GM12878 (cell line): ENCODE measurements at regions of chr20 and their contacts with region 1.

Region 1: GRCh38 chr20:53738039-53738944 is 144.7 kb upstream of the ZNF217 start:
- DNase-seq: no peak
- ATAC-seq: no peak
- H3K4me3 ChIP-seq: 0 out of 2 replicates have a peak overlapping the region, but pooled peaks have one; percentile 69
- H3K27ac ChIP-seq: peak overlapping the region; percentile 86
- H3K4me1 ChIP-seq: peaks cover 56% of the 10 kb centered on the region
- H3K27me3 ChIP-seq: no peaks in the 10 kb centered on the region
- CTCF ChIP-seq: no peak
- EP300 ChIP-seq: no peak
- POLR2A ChIP-seq: no peak
- RAD21 ChIP-seq: no peak

Region 2: GRCh38 chr20:53594068-53595017 is 143.9 kb before region 1 on chr20:
- CTCF ChIA-PET with region 1: interaction called, 4 read pairs
- POLR2A ChIA-PET with region 1: interaction called, 4 read pairs
- RAD21 ChIA-PET with region 1: interaction called, 12 read pairs
- SMC1A ChIA-PET with region 1: interaction called, 4 read pairs
- in situ Hi-C with region 1: no loop called
- intact Hi-C with region 1: no loop called
- DNase-seq: no peak
- ATAC-seq: peak; percentile 77
- H3K4me3 ChIP-seq: peak overlapping the region; percentile 81
- H3K27ac ChIP-seq: peak overlapping the region; percentile 84
- H3K4me1 ChIP-seq: peaks cover 8% of the 10 kb centered on the region; the same call in 1 of the 2 replicates
- H3K27me3 ChIP-seq: no peaks in the 10 kb centered on the region
- CTCF ChIP-seq: peak; percentile 7 to 53 (median 40); a peak in 3 of 6 replicates
- EP300 ChIP-seq: no peak
- POLR2A ChIP-seq: peak; percentile 36; the same call in 1 of the 2 replicates
- RAD21 ChIP-seq: peak; percentile 40

Region 3: GRCh38 chr20:53652090-53652858 is 86.0 kb before region 1 on chr20:
- CTCF ChIA-PET with region 1: interaction called, 7 read pairs
- POLR2A ChIA-PET with region 1: interaction called, 10 read pairs
- RAD21 ChIA-PET with region 1: interaction called, 26 read pairs
- SMC1A ChIA-PET with region 1: interaction called, 149 read pairs
- in situ Hi-C with region 1: no loop called
- intact Hi-C with region 1: loop called (anchors 5 kb)
- DNase-seq: peak; percentile 93
- ATAC-seq: peak; percentile 76
- H3K4me3 ChIP-seq: peak overlapping the region; percentile 30; the same call in 1 of the 2 replicates
- H3K27ac ChIP-seq: peak overlapping the region; percentile 99
- H3K4me1 ChIP-seq: peaks cover 39% of the 10 kb centered on the region
- H3K27me3 ChIP-seq: no peaks in the 10 kb centered on the region
- CTCF ChIP-seq: no peak
- EP300 ChIP-seq: peak; percentile 68 to 72; a peak in 2 of 4 replicates
- POLR2A ChIP-seq: no peak
- RAD21 ChIP-seq: peak; percentile 17; the same call in 1 of the 2 replicates

Region 4: DNA sequence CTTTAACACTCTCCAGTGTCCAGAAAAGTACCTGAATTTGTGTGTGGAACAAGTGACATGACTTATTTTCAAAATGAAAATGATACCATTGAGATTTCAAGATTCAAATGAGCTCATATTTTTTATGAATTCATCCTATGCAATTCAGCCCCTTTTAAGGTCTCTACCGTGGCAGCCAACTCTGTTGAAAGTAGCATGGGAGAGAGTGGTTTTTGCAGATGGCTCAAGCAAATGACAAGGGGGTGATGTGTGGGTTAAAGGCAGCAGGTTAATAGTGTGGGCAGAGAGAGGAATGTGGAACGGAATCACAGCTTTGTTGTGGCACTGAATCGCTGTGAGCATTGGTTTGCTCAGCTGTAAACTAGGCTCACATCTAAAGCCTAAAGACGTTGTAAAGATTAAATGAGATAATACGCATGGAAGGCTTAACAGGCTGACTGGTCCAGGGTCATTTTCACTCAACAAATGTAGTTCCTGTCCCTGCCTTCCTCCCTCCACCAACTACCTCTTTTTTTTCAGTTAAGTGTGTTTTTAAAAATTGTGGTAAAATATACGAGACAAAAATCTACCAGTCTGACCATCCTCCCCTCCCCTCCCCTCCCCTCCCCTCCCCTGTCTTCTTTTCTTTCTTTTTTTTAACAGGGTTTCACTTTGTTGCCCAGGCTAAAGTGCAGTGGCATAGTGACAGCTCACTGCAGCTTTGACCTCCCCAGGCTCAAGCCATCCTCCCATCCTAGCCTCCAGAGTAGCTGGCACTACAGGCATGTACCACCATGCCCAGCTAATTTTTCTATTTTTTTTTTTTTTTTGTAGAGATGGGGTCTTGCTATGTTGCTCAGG is 29.9 kb before region 1 on chr20:
- CTCF ChIA-PET with region 1: interaction called, 9 read pairs
- POLR2A ChIA-PET with region 1: interaction called, 21 read pairs
- RAD21 ChIA-PET with region 1: interaction called, 33 read pairs
- SMC1A ChIA-PET with region 1: interaction called, 64 read pairs
- in situ Hi-C with region 1: no loop called
- intact Hi-C with region 1: loop called (anchors 2 kb)
- DNase-seq: peak; percentile 94
- ATAC-seq: peak; percentile 83
- H3K4me3 ChIP-seq: peak overlapping the region; percentile 43; the same call in 1 of the 2 replicates
- H3K27ac ChIP-seq: peak overlapping the region; percentile 97
- H3K4me1 ChIP-seq: peaks cover 45% of the 10 kb centered on the region
- H3K27me3 ChIP-seq: no peaks in the 10 kb centered on the region
- CTCF ChIP-seq: no peak
- EP300 ChIP-seq: peak in 1 of 2 experiments; percentile 35; a peak in 3 of 4 replicates
- POLR2A ChIP-seq: peak; percentile 36
- RAD21 ChIP-seq: 0 out of 2 replicates have a peak, but pooled peaks have one; percentile 6

Region 5: GRCh38 chr20:53828682-53829254 is 90.5 kb after region 1 on chr20:
- CTCF ChIA-PET with region 1: interaction called, 5 read pairs
- POLR2A ChIA-PET with region 1: interaction called, 9 read pairs
- RAD21 ChIA-PET with region 1: interaction called, 13 read pairs
- SMC1A ChIA-PET with region 1: interaction called, 16 read pairs
- in situ Hi-C with region 1: no loop called
- intact Hi-C with region 1: no loop called
- DNase-seq: no peak
- ATAC-seq: peak; percentile 2; the same call in 2 of the 3 replicates
- H3K4me3 ChIP-seq: peak overlapping the region; percentile 56
- H3K27ac ChIP-seq: peak overlapping the region; percentile 91
- H3K4me1 ChIP-seq: peaks cover 37% of the 10 kb centered on the region
- H3K27me3 ChIP-seq: no peaks in the 10 kb centered on the region
- CTCF ChIP-seq: 0 out of 6 replicates have a peak, but pooled peaks of 1 of the 3 experiments have one; percentile 4
- EP300 ChIP-seq: no peak
- POLR2A ChIP-seq: no peak
- RAD21 ChIP-seq: 0 out of 2 replicates have a peak, but pooled peaks have one; percentile 1

Region 6: DNA sequence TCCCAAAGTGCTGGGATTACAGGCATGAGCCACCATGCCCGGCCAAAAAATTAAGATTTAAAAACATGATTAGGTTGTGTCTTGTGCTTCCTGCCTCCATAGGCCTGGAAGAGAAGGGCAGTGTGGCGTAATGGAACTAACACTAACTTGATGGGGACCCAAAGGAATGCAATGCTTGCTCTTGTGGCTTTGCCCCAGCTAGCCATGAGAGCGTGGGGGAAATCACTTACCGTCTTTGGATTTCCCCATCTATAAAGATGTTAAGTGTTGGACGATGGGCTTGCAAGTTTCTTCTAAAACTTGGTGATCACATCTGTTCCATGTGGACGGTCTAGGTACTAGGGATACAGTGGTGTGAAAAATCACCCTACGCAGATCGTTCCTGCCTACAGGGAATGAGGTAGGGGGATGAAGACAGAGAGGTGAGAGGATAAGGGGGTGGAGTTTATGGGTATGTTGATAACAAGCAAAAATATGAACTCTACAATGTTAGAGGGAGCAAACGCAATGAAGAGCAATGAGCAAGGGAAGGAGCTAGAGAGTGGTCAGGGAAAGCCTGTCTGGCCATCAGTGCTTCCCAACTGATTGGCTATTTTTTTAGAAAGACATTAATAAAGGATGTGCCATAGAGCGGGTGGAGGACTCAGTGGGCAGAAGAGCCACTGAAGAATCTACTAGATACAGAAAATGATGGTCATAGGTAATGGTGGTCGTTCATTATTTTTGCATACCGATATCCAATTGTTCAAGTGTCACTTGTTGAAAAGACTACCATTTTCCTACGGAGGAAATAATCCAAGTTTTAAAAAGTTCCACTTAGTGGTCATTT is 166.9 kb after region 1 on chr20:
- CTCF ChIA-PET with region 1: interaction called, 3 read pairs
- POLR2A ChIA-PET with region 1: interaction called, 5 read pairs
- RAD21 ChIA-PET with region 1: interaction called, 13 read pairs
- SMC1A ChIA-PET with region 1: interaction called, 11 read pairs
- in situ Hi-C with region 1: no loop called
- intact Hi-C with region 1: no loop called
- DNase-seq: no peak
- ATAC-seq: peak; percentile 51
- H3K4me3 ChIP-seq: 0 out of 2 replicates have a peak overlapping the region, but pooled peaks have one; percentile 15
- H3K27ac ChIP-seq: peak overlapping the region; percentile 72
- H3K4me1 ChIP-seq: peaks cover 43% of the 10 kb centered on the region
- H3K27me3 ChIP-seq: no peaks in the 10 kb centered on the region
- CTCF ChIP-seq: no peak
- EP300 ChIP-seq: peak in 1 of 2 experiments; percentile 50; a peak in 1 of 4 replicates
- POLR2A ChIP-seq: no peak
- RAD21 ChIP-seq: no peak